Activated naive CD8-positive, alpha-beta T cell treated with anti-CD3 and anti-CD28 coated beads, Interleukin-2, amount 10 ng/mL, durations not matched to agents 7 days and 5 days (primary cell): ENCODE measurements at regions of chr14 and their contacts with region 1.

Region 1: GRCh38 chr14:60637479-60638315 is 11.6 kb downstream of the SIX1 start:
- DNase-seq: peak; percentile 32
- ATAC-seq: no peak
- H3K4me3 Mint-ChIP-seq: peak overlapping the region; percentile 47
- H3K27ac Mint-ChIP-seq: no peak overlapping the region
- H3K4me1 Mint-ChIP-seq: peaks cover 11% of the 10 kb centered on the region
- H3K27me3 Mint-ChIP-seq: peaks cover 89% of the 10 kb centered on the region

Region 2: GRCh38 chr14:59939828-59940227 is 697.9 kb before region 1 on chr14:
- POLR2A ChIA-PET with region 1: interaction called, 10 read pairs
- DNase-seq: no peak
- ATAC-seq: no peak
- H3K4me3 Mint-ChIP-seq: no peak overlapping the region
- H3K27ac Mint-ChIP-seq: no peak overlapping the region
- H3K4me1 Mint-ChIP-seq: no peaks in the 10 kb centered on the region
- H3K27me3 Mint-ChIP-seq: no peaks in the 10 kb centered on the region

Region 3: GRCh38 chr14:60760653-60761364 is 123.1 kb after region 1 on chr14:
- POLR2A ChIA-PET with region 1: no interaction called
- DNase-seq: no peak
- ATAC-seq: no peak
- H3K4me3 Mint-ChIP-seq: no peak overlapping the region
- H3K27ac Mint-ChIP-seq: no peak overlapping the region
- H3K4me1 Mint-ChIP-seq: peaks cover 33% of the 10 kb centered on the region
- H3K27me3 Mint-ChIP-seq: peaks cover 9% of the 10 kb centered on the region